RWPE1 (cell line): ENCODE measurements at regions of chr19 and their contacts with region 1.

Region 1: DNA sequence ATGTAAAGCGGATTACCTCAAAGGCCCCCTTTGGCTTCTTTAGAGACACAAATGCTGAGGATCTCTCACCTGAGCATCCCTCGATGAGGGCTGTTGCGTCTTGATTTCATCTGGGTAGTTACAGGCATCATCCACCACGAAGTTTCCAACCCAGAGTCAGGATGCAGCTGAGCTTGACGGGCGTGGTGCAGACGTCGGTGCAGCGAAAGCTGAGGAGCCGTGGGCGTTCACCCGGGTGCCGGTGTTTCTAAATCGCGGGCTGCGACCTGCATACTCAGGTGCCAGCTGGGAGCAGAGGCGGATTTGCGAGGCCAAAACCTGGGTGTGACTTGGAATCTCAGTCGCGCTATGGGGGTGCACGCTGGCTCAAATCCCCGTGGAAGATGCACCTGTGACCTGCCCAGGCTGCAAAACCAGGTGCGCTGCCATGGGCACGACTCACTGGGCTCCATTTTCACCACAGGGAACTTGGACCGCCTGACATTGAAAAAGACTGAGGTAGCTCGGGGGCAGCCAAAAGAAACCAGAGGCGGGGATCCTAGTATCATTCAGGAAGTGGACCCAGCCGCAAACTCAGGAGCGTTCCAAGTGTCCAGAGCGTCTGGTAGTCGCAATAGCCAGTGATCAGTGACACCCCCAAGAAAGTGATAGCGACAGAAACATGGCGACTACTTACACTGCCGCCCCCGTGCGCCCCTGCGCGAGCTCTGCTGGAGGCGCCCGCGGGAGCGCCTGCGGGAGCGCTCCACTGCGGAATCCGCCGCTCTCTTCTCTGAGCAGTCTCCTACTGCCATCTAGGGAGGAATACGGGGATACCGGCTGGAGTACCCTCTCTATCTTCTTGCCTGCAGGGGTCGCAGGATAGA is 36.4 kb upstream of the IGFL4 start:
- DNase-seq: peak; percentile 92
- H3K27ac ChIP-seq: peak overlapping the region; percentile 50
- CTCF ChIP-seq: peak; percentile 97

Region 2: DNA sequence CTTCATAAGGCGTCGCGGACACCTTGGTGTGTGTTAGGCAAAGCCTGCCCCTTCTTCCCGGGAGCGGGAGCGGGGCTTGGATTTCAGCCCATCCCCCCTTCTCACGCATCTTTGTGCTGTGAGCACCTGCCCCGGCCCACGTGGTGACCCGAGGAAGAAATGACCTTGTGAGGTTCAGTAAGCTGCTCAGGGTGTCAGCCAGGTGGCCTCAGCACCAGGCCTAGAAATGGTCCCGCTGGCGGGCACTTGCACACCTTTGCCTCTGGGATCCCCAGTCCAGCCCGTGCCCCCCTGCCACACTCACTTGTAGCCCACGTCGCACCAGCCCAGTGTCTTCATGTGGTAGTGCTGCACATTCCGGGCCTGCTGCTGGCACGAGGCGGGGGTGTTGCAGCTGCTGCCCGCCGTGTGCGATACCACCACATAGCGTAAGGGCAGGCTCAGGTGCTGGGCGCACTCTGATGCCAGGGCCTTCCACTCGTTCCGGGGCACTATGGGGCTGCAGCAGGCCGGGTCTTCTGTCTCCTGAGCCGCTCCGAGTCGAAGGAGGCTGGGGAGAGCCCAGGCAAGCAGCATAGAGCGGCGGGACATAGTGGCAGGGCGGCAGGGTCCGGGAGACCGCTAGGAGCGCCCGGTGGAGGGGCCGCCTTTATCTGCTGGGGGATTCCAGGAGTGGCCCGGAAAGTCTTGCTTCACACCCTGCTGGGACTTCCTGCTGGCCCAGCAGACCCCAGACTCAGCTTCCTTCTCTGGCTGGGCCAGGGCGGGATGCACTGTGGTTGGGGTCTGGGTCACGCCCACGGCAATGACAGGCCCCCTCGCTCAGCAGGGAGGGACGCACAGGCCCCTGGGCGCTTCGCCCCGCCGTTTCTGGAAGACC is 54.5 kb before region 1 on chr19 and contains the start of gene PGLYRP1:
- CTCF ChIA-PET with region 1: interaction called, 69 read pairs
- POLR2A ChIA-PET with region 1: no interaction called
- DNase-seq: no peak
- H3K27ac ChIP-seq: peak within 1 kb of the TSS; percentile 67
- CTCF ChIP-seq: no peak

Region 3: GRCh38 chr19:46030812-46031550 is 46.2 kb before region 1 on chr19:
- CTCF ChIA-PET with region 1: interaction called, 69 read pairs
- POLR2A ChIA-PET with region 1: no interaction called
- DNase-seq: no peak
- H3K27ac ChIP-seq: no peak overlapping the region
- CTCF ChIP-seq: no peak

Region 4: DNA sequence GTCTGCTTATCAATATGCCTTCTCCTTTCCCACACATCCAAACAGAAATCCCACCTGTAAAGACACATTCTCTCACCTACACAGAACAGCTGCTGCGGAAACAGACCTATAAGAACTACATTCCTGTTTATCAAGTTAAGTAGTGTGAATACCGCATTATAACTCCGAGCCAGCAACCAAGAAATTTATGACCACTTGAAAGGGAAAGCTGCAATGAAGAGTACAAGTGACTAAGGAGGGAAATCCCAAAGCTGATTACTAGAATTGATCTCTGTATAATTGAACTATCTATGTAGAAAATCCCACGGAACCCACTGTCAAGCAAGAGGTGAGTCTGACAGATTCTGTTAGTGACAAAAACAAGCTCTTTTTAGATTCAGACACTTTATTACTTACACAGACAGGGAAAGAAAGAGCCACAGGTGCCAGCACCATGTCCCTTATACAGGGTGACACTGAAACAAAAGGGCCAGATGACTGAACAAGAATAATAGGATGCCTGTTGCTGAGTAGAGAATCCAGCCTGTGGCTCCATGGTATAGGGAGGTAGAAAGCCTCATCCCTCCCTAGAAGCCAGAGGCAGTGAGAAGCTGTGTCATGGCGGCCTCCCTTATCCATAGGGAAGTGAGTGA is 34.8 kb before region 1 on chr19:
- CTCF ChIA-PET with region 1: interaction called, 12 read pairs
- POLR2A ChIA-PET with region 1: no interaction called
- DNase-seq: no peak
- H3K27ac ChIP-seq: no peak overlapping the region
- CTCF ChIP-seq: no peak

Region 5: GRCh38 chr19:46133101-46133682 is 56.0 kb after region 1 on chr19:
- CTCF ChIA-PET with region 1: no interaction called
- POLR2A ChIA-PET with region 1: no interaction called
- DNase-seq: peak; percentile 47
- H3K27ac ChIP-seq: peak overlapping the region; percentile 73
- CTCF ChIP-seq: no peak

Region 6: GRCh38 chr19:46192992-46193650 is 115.9 kb after region 1 on chr19:
- CTCF ChIA-PET with region 1: interaction called, 13 read pairs
- POLR2A ChIA-PET with region 1: no interaction called
- DNase-seq: peak; percentile 70
- H3K27ac ChIP-seq: peak overlapping the region; percentile 91
- CTCF ChIP-seq: no peak

Region 7: DNA sequence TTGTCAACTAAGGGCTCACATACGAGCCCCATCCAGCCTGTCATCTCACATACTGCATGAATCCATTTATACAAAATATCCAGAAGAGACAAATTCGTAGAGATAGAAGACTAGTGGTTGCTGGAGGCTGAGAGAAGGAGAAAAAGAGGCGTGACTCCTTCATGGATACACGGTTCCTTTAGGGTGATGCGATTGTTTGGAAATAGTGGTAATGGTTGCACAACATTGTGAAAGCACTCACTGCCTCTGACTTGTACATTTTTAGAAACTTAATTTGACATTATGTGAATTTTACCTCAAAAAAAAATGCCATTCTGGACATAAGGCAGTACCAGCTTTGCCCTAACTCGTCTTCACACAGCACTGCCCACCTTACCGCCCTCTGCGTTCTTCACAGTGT is 179.7 kb after region 1 on chr19:
- CTCF ChIA-PET with region 1: interaction called, 11 read pairs
- POLR2A ChIA-PET with region 1: no interaction called
- DNase-seq: no peak
- H3K27ac ChIP-seq: no peak overlapping the region
- CTCF ChIP-seq: no peak

Region 8: GRCh38 chr19:46265217-46265828 is 188.1 kb after region 1 on chr19:
- CTCF ChIA-PET with region 1: interaction called, 38 read pairs
- POLR2A ChIA-PET with region 1: no interaction called
- DNase-seq: peak; percentile 79
- H3K27ac ChIP-seq: no peak overlapping the region
- CTCF ChIP-seq: peak; percentile 78